WTC11 (cell line): ENCODE measurements at regions of chr17 and their contacts with region 1.

Region 1: DNA sequence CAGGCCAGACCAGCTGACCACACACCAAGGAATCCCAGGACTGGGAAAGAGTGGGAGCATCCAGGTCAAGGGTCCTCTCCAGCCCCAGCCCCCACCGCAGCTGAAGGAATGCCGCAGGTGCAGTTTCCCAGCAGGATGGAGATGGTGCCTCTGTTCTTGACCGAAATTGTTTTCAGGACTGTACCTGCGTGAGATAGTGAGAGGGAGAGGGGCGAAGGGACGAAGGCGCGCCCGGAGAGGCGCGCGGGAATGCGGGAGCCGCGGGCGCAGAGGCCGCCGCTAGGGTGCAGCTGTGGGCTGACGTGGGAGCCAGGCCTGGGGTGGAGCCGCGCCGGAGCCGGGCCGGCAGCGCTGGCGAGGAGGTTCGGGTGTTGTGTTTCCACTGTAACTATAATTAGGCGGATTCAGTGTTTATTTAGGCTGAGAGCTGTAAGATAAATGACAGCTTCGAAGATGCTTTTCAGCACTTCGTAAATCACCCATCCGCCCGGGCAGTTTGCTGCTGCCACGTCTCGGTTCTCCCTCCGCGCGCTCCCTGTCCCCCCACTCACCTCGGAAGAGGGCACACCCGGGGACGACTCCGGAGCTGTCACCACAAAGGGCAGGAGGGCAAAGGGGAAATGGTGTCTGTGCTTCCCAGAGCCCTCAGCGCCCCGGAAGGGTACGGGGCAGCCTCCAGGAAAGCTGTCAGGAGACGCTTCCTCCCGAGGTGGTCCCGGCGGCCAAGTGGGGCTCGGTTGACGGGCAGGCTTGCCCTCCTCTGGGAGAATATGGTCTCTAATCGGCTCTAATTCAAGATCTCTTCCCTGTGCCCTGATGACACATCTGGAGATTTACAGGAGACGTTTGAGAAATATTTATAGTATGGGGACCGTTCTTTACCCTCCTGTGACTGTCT is 38.2 kb downstream of the HOXB1 start:
- DNase-seq: peak; percentile 69
- ATAC-seq: peak; percentile 88
- H3K4me3 Mint-ChIP-seq: peak overlapping the region; percentile 57
- H3K27ac Mint-ChIP-seq: no peak overlapping the region
- H3K4me1 Mint-ChIP-seq: peaks cover 23% of the 10 kb centered on the region
- H3K27me3 Mint-ChIP-seq: peaks cover 85% of the 10 kb centered on the region
- CTCF ChIP-seq: peak; percentile 38

Region 2: DNA sequence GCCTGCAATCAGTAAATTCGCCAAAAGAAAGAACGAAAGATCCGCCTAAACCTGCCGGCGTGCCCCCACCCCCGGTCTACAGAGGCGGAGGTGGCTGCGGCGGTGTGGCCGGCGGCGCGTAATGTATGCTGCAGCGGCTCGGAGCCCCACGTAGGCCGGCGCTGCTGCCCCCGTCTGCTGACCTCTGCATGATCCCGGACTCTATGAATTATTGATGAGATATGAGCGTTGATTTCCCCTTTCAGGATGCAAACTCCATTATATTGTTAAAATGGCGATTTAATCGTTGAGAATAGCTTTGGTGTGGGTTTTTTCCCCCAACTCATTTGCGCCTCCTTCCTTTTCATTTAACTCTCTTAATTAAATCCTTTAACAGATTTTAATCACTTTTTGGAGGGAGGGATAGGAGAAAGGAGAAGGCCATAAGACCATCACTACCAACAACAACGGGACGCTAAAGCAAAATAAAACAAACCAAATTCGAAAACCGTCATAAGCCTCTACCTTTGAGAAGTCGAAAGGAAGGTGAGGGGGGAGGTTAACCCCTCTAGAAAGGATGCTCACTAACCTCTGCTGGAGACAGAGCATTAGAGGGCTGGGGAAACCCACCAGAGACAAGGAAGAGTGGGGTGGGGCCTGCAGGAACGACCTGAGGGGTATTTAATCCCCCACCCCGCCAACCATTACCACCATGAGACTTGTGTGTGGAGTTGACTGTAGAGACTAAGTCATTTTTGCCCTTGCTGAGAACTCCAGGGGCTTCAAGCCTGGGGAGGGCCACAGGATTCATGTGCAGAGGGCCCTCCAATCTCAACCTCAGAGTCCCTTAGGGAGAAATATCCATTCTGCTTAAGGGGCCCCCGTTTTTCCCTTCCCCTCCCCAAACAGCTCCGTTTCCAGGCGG is 94.0 kb after region 1 on chr17:
- CTCF ChIA-PET with region 1: interaction called, 10 read pairs
- POLR2A ChIA-PET with region 1: no interaction called
- DNase-seq: no peak
- ATAC-seq: no peak
- H3K4me3 Mint-ChIP-seq: no peak overlapping the region
- H3K27ac Mint-ChIP-seq: no peak overlapping the region
- H3K4me1 Mint-ChIP-seq: peaks cover 43% of the 10 kb centered on the region
- H3K27me3 Mint-ChIP-seq: peaks cover 100% of the 10 kb centered on the region; the same call in 1 of the 2 replicates
- CTCF ChIP-seq: no peak

Region 3: GRCh38 chr17:48944519-48945260 is 452.0 kb after region 1 on chr17 and contains the start of gene SNF8:
- CTCF ChIA-PET with region 1: no interaction called
- POLR2A ChIA-PET with region 1: interaction called, 10 read pairs
- DNase-seq: peak; percentile 97
- ATAC-seq: peak; percentile 91
- H3K4me3 Mint-ChIP-seq: peak within 1 kb of the TSS; percentile 100
- H3K27ac Mint-ChIP-seq: peak within 1 kb of the TSS; percentile 97
- H3K4me1 Mint-ChIP-seq: peaks cover 10% of the 10 kb centered on the region
- H3K27me3 Mint-ChIP-seq: no peaks in the 10 kb centered on the region; the same call in 1 of the 2 replicates
- CTCF ChIP-seq: no peak
- total RNA-seq, gene SNF8: 116 to 136 TPM (median 127 TPM) in 3 replicates